Right ventricle myocardium inferior (tissue), 1 donor: ENCODE measurements at regions of chr15 and their contacts with region 1.

Region 1: DNA sequence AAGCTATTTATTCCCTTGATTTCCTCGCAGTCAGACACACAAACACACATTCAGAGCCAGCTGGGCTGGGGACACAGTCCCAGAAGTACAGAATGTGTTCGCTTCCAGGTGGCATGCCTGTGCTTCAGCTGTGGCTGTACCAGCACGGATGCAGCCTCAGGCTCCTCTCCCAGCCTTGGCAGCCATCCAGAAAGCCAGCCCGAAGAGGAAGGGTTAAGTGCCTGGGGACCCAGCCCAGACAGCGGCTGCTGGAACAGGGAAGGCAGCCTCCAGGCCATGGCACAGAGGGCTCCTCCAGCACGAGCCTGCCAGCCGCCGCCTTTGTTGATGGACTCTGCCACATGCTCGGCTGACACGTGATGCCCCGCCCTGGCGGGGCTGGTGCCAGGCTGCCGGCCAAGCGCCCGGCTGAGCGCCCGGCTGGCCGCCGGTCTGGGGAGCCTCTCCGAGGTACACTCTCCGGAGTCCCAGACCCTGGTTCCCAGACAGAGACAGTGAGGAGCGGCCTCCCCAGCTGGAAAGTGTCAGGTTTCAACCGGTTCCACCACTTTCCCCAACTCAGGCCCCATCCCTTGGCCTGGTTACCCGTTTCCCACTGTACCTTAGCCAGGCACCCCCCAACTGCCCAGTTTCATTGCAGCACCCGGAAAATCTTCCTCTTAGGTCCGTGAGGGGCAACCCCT is 5.4 kb downstream of the BMF start:
- DNase-seq: peak; percentile 87
- ATAC-seq: peak; percentile 56

Region 2: DNA sequence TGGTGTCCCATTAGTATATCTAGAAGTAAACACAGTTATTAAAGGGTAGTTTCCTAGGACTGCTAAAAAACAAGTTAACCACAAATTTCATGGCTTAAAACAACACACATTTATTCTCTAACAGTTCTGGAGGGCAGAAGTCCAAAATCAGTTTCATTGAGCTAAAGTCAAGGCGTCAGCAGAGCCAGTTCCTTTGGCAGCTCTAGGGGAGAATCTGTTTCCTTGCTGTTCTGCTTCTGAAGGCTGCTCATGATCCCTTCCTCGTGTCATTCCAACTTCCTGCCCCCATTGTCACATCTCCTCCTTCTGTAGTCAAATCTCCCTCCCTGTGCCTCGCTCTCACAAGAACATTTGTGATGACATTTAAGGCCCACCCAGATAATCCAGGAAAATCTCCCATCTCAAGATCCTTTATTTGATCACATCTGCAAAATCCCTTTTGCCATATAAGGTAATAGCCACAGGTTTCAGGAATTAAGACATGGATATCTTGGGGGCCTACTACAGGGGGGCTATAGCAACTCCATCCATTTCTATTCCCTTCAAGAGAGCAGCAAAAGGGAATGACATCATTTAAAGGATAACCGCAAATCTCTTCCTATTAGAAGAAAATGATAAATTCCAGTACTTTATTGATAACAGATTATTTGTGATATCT is 233.3 kb before region 1 on chr15:
- intact Hi-C with region 1: no loop called
- DNase-seq: no peak
- ATAC-seq: no peak

Region 3: GRCh38 chr15:40069178-40070165 is 33.8 kb before region 1 on chr15:
- intact Hi-C with region 1: loop called (anchors 2 kb)
- DNase-seq: peak; percentile 95
- ATAC-seq: peak; percentile 91